Mammary epithelial cell (primary cell): ENCODE measurements at regions of chr10 and their contacts with region 1.

Region 1: GRCh38 chr10:4725917-4726606 is 99.9 kb upstream of the AKR1E2 start:
- DNase-seq: peak; percentile 89
- H3K4me3 ChIP-seq: peak overlapping the region in 1 of 3 experiments; percentile 27
- H3K27ac ChIP-seq: peak overlapping the region; percentile 100
- H3K4me1 ChIP-seq: no peaks in the 10 kb centered on the region
- H3K27me3 ChIP-seq: no peaks in the 10 kb centered on the region
- CTCF ChIP-seq: no peak

Region 2: GRCh38 chr10:4686644-4686996 is 39.4 kb before region 1 on chr10:
- CTCF ChIA-PET with region 1: interaction called, 8 read pairs
- dilution Hi-C with region 1: no loop called
- in situ Hi-C with region 1: no loop called
- intact Hi-C with region 1: loop called (anchors 1 kb)
- DNase-seq: peak; percentile 99
- H3K4me3 ChIP-seq: peak overlapping the region in 2 of 3 experiments; percentile 34 to 35
- H3K27ac ChIP-seq: peak overlapping the region; percentile 100
- H3K4me1 ChIP-seq: peaks cover 55% of the 10 kb centered on the region
- H3K27me3 ChIP-seq: no peaks in the 10 kb centered on the region
- CTCF ChIP-seq: no peak

Region 3: DNA sequence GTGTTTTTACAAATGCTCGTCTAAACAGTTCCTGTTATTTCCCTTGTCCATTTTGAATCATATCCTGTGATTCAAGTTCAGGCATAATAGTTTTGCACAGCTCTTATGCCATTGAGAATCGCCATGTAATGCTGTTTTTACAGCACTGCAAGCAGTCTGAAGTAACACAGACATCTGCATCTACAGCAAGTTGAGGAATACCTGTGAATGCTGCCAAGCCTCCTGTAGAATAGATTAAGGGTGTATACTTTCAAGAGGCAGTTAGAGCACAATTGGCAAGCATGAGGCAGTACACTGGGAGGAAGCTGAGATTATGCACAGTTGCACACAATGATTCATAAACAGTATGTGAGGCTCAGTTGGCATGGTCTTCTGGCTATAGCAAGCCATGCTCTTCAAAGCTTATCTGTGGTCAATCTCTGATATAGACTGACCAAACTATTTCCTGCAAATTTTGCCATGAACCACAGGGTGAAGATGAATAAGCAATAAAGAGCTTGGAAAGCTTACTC is 22.0 kb before region 1 on chr10:
- CTCF ChIA-PET with region 1: no interaction called
- dilution Hi-C with region 1: no loop called
- in situ Hi-C with region 1: no loop called
- intact Hi-C with region 1: loop called (anchors 1 kb)
- DNase-seq: peak; percentile 99
- H3K4me3 ChIP-seq: no peak overlapping the region
- H3K27ac ChIP-seq: peak overlapping the region; percentile 97
- H3K4me1 ChIP-seq: peaks cover 17% of the 10 kb centered on the region
- H3K27me3 ChIP-seq: no peaks in the 10 kb centered on the region
- CTCF ChIP-seq: no peak